ENCODE measurements at regions of chr15 and their contacts with region 1.

Region 1: GRCh38 chr15:55993111-55993803 is at the start of gene NEDD4:
- DNase-seq: peak; percentile 88
- H3K4me3 ChIP-seq: peak within 1 kb of the TSS; percentile 68
- H3K4me3 Mint-ChIP-seq: peak within 1 kb of the TSS; percentile 89
- H3K27ac Mint-ChIP-seq: peak within 1 kb of the TSS; percentile 77
- H3K4me1 ChIP-seq: peaks cover 14% of the 10 kb centered on the region
- H3K4me1 Mint-ChIP-seq: peaks cover 31% of the 10 kb centered on the region
- H3K27me3 ChIP-seq: no peaks in the 10 kb centered on the region
- H3K27me3 Mint-ChIP-seq: no peaks in the 10 kb centered on the region
- CTCF ChIP-seq: peak; percentile 46 to 58
- total RNA-seq, gene NEDD4: 27.0 and 33.9 TPM in 2 replicates

Region 2: GRCh38 chr15:55897560-55898336 is 95.5 kb before region 1 on chr15:
- CTCF ChIA-PET with region 1: interaction called, 4 read pairs
- POLR2A ChIA-PET with region 1: no interaction called
- intact Hi-C with region 1: loop called (anchors 1 kb)
- DNase-seq: peak; percentile 55 to 68
- H3K4me3 ChIP-seq: no peak overlapping the region
- H3K4me3 Mint-ChIP-seq: no peak overlapping the region
- H3K27ac Mint-ChIP-seq: no peak overlapping the region
- H3K4me1 ChIP-seq: peaks cover 5% of the 10 kb centered on the region; the same call in 1 of the 2 replicates
- H3K4me1 Mint-ChIP-seq: no peaks in the 10 kb centered on the region
- H3K27me3 ChIP-seq: no peaks in the 10 kb centered on the region
- H3K27me3 Mint-ChIP-seq: no peaks in the 10 kb centered on the region
- CTCF ChIP-seq: peak; percentile 73 to 95

Region 3: GRCh38 chr15:55959744-55960447 is 33.4 kb before region 1 on chr15:
- CTCF ChIA-PET with region 1: no interaction called
- POLR2A ChIA-PET with region 1: no interaction called
- intact Hi-C with region 1: no loop called
- DNase-seq: no peak
- H3K4me3 ChIP-seq: no peak overlapping the region
- H3K4me3 Mint-ChIP-seq: no peak overlapping the region
- H3K27ac Mint-ChIP-seq: peak overlapping the region; percentile 24
- H3K4me1 ChIP-seq: peaks cover 14% of the 10 kb centered on the region
- H3K4me1 Mint-ChIP-seq: peaks cover 20% of the 10 kb centered on the region
- H3K27me3 ChIP-seq: no peaks in the 10 kb centered on the region
- H3K27me3 Mint-ChIP-seq: no peaks in the 10 kb centered on the region
- CTCF ChIP-seq: no peak

Region 4: GRCh38 chr15:56040081-56041035 is 47.1 kb after region 1 on chr15:
- CTCF ChIA-PET with region 1: interaction called, 9 read pairs
- POLR2A ChIA-PET with region 1: interaction called, 8 read pairs
- intact Hi-C with region 1: loop called (anchors 1 kb)
- DNase-seq: peak; percentile 85 to 88
- H3K4me3 ChIP-seq: no peak overlapping the region
- H3K4me3 Mint-ChIP-seq: peak overlapping the region; percentile 33
- H3K27ac Mint-ChIP-seq: peak overlapping the region; percentile 91
- H3K4me1 ChIP-seq: peaks cover 90% of the 10 kb centered on the region
- H3K4me1 Mint-ChIP-seq: peaks cover 63% of the 10 kb centered on the region
- H3K27me3 ChIP-seq: no peaks in the 10 kb centered on the region
- H3K27me3 Mint-ChIP-seq: no peaks in the 10 kb centered on the region
- CTCF ChIP-seq: no peak

Region 5: GRCh38 chr15:56098195-56098863 is 105.1 kb after region 1 on chr15:
- CTCF ChIA-PET with region 1: interaction called, 5 read pairs
- POLR2A ChIA-PET with region 1: no interaction called
- intact Hi-C with region 1: loop called (anchors 2 kb)
- DNase-seq: no peak
- H3K4me3 ChIP-seq: no peak overlapping the region
- H3K4me3 Mint-ChIP-seq: no peak overlapping the region
- H3K27ac Mint-ChIP-seq: no peak overlapping the region
- H3K4me1 ChIP-seq: peaks cover 12% of the 10 kb centered on the region; the same call in 1 of the 2 replicates
- H3K4me1 Mint-ChIP-seq: no peaks in the 10 kb centered on the region
- H3K27me3 ChIP-seq: no peaks in the 10 kb centered on the region
- H3K27me3 Mint-ChIP-seq: no peaks in the 10 kb centered on the region
- CTCF ChIP-seq: peak in 1 of 2 experiments; percentile 8

Region 6: GRCh38 chr15:56428821-56429458 is 435.7 kb after region 1 on chr15:
- CTCF ChIA-PET with region 1: no interaction called
- POLR2A ChIA-PET with region 1: no interaction called
- intact Hi-C with region 1: loop called (anchors 5 kb)
- DNase-seq: peak in 1 of 2 experiments; percentile 4
- H3K4me3 ChIP-seq: no peak overlapping the region
- H3K4me3 Mint-ChIP-seq: no peak overlapping the region
- H3K27ac Mint-ChIP-seq: no peak overlapping the region
- H3K4me1 ChIP-seq: no peaks in the 10 kb centered on the region
- H3K4me1 Mint-ChIP-seq: no peaks in the 10 kb centered on the region
- H3K27me3 ChIP-seq: no peaks in the 10 kb centered on the region
- H3K27me3 Mint-ChIP-seq: no peaks in the 10 kb centered on the region
- CTCF ChIP-seq: peak; percentile 35 to 41

Region 7: GRCh38 chr15:56491110-56491722 is 498.0 kb after region 1 on chr15:
- CTCF ChIA-PET with region 1: no interaction called
- POLR2A ChIA-PET with region 1: no interaction called
- intact Hi-C with region 1: no loop called
- DNase-seq: peak; percentile 55 to 67
- H3K4me3 ChIP-seq: no peak overlapping the region
- H3K4me3 Mint-ChIP-seq: no peak overlapping the region
- H3K27ac Mint-ChIP-seq: no peak overlapping the region
- H3K4me1 ChIP-seq: no peaks in the 10 kb centered on the region
- H3K4me1 Mint-ChIP-seq: peaks cover 7% of the 10 kb centered on the region
- H3K27me3 ChIP-seq: no peaks in the 10 kb centered on the region
- H3K27me3 Mint-ChIP-seq: peaks cover 10% of the 10 kb centered on the region
- CTCF ChIP-seq: peak; percentile 74 to 85